Activated CD4-positive, alpha-beta memory T cell treated with anti-CD3 and anti-CD28 coated beads, Interleukin-2, amount 10 ng/mL, durations not matched to agents 7 days and 5 days (primary cell): ENCODE measurements at regions of chr11 and their contacts with region 1.

Region 1: DNA sequence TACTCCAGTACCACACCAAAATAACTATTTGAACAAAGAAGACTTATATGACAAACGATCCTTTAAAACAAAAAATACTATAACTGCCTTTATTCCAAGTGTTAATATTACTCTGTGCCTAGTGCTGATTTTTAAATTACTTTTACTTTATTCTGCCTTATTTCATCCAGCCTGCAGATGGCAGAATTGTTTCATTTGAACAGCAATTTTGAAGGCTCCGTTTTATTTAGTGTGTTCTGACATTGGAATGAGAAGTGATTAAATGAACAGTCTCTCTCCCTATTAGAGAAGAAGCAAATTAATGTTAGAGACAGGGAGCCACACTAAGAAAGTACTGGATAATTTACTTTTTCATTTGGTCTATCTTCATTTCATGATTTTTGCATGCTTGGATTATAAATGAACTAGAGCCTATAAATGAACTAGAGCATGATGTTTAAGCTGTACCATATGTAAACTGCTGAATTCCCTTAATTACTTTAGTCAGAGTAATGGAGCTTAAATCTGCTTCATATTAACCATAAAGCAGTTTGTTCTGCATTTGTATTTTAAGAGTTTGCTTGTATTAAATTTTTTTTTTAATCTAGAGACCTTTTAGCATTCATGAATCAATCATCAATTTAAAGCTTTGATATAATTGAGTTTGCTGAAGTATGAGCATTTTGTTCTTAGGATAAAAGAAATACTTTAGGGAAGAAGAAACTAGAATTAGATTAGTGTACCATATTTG is 9.8 kb downstream of the PDHX start:
- DNase-seq: no peak
- H3K4me3 Mint-ChIP-seq: no peak overlapping the region
- H3K27ac Mint-ChIP-seq: no peak overlapping the region
- H3K4me1 Mint-ChIP-seq: peaks cover 13% of the 10 kb centered on the region
- H3K27me3 Mint-ChIP-seq: no peaks in the 10 kb centered on the region

Region 2: GRCh38 chr11:34916015-34916842 is 10.0 kb before region 1 on chr11 and contains the starts of genes APIP and PDHX:
- CTCF ChIA-PET with region 1: interaction called, 5 read pairs
- POLR2A ChIA-PET with region 1: interaction called, 13 read pairs
- DNase-seq: peak; percentile 96
- H3K4me3 Mint-ChIP-seq: peak within 1 kb of the TSS; percentile 81
- H3K27ac Mint-ChIP-seq: peak within 1 kb of the TSS; percentile 76
- H3K4me1 Mint-ChIP-seq: peaks cover 33% of the 10 kb centered on the region
- H3K27me3 Mint-ChIP-seq: no peaks in the 10 kb centered on the region
- total RNA-seq, gene APIP: 21.9 to 25.5 TPM
- total RNA-seq, gene PDHX: 28.0 to 29.7 TPM

Region 3: DNA sequence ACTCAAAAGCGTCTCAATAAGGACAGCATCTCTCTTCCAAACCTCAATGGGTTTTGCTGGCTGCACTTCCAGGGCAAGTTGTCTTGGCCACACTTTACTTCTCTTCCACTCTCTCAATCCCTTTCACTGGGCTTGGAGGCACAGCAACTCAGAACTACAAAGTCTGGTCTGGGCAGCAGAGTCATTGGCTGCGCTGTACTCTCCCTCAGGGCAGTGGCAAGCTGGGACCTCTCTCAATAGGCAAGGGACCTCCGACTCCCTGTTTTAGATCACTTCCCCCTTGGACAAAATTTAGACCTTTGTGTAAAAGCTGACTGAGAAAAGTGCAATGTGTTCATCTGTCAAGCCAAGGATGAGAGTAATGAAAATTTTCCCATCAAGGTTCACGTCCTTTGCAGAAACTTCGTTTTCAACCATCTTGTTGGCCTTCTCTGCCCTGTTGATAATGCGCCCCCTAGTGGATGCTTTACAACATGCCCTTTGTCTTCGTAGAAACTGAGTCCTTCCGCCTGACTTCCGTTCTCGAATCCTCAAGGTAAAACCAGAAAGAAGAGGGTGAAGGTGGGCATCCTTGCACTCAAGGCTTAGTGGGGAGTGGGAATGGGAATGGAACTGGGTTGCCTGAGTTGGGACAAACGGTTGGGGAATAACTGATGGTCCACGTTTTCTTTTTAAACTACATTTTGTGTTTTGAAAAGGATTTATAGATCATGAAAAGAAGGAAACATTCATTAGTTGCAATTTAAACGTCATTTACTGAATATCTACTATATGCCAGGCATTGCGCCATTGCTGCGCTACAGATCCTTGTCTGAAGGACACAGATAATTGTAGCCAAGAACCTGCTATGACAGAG is 311.8 kb after region 1 on chr11:
- CTCF ChIA-PET with region 1: interaction called, 10 read pairs
- POLR2A ChIA-PET with region 1: no interaction called
- DNase-seq: peak; percentile 59
- H3K4me3 Mint-ChIP-seq: no peak overlapping the region
- H3K27ac Mint-ChIP-seq: peak overlapping the region; percentile 36
- H3K4me1 Mint-ChIP-seq: peaks cover 81% of the 10 kb centered on the region
- H3K27me3 Mint-ChIP-seq: peaks cover 2% of the 10 kb centered on the region

Region 4: GRCh38 chr11:35391922-35392813 is 465.9 kb after region 1 on chr11:
- CTCF ChIA-PET with region 1: interaction called, 42 read pairs
- POLR2A ChIA-PET with region 1: no interaction called
- DNase-seq: peak; percentile 84
- H3K4me3 Mint-ChIP-seq: no peak overlapping the region
- H3K27ac Mint-ChIP-seq: no peak overlapping the region
- H3K4me1 Mint-ChIP-seq: peaks cover 19% of the 10 kb centered on the region
- H3K27me3 Mint-ChIP-seq: peaks cover 18% of the 10 kb centered on the region